ENCODE measurements at regions of chr9 and their contacts with region 1.

Region 1: DNA sequence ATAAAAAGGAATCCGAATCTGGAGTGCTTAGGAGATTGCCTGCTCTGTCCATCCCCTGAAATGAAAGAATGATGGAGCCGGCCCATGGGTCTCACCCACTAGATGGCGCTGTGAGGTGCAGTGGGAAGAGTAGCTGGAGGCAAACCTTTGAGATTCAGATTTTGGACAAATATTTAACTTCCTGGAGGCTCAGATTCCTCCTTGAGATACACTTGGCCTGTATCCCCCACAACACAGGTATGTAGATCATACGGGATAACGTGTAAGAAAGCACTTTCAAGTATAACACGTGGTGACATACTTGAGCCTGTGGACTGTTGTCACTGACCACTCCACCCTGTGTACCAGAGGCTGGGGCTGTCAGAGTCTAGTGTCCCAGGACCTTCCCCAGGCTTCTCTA is 32.3 kb downstream of the TRMO start:
- DNase-seq: peak; percentile 82
- ATAC-seq: peak; percentile 87
- H3K4me3 Mint-ChIP-seq: no peak overlapping the region
- H3K27ac Mint-ChIP-seq: no peak overlapping the region
- H3K4me1 Mint-ChIP-seq: peaks cover 5% of the 10 kb centered on the region
- H3K27me3 Mint-ChIP-seq: no peaks in the 10 kb centered on the region
- CTCF ChIP-seq: peak; percentile 95

Region 2: DNA sequence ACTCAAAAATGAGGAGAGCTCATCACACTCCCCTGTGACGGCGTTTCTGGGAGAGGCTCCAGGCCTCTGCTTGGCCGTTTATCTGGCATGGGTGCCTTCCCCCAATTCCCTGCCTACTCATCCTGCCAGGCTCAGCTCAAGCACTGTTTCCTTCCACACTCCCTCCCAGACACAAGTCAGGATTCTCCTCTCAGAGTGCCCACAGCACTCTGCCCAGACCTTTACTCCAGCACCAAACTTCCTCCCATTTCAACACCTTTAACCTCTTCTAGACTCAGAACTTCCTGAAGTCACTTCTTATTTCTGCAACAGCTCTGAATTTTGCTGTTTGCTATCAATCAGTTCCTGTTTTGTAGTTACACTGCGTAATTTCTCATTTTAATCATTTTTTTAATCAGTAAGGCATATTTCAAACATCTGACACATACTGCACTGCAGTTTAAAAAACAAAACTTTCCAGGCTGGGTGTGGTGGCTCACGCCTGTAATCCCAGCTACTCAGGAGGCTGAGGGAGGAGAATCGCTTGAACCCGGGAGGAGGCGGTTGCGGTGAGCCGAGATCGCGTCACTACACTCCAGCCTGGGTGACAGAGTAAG is 16.3 kb after region 1 on chr9:
- CTCF ChIA-PET with region 1: interaction called, 169 read pairs
- POLR2A ChIA-PET with region 1: interaction called, 4 read pairs
- intact Hi-C with region 1: no loop called
- DNase-seq: peak; percentile 43
- ATAC-seq: peak; percentile 10
- H3K4me3 Mint-ChIP-seq: peak overlapping the region; percentile 55
- H3K27ac Mint-ChIP-seq: peak overlapping the region; percentile 98
- H3K4me1 Mint-ChIP-seq: peaks cover 75% of the 10 kb centered on the region
- H3K27me3 Mint-ChIP-seq: no peaks in the 10 kb centered on the region
- CTCF ChIP-seq: no peak